Posterior cingulate gyrus (tissue), 11 donors: ENCODE measurements at regions of chr7 and their contacts with region 1.

Region 1: GRCh38 chr7:75830978-75831377 is 17.4 kb upstream of the CCL24 start:
- DNase-seq: no peak

Region 2: DNA sequence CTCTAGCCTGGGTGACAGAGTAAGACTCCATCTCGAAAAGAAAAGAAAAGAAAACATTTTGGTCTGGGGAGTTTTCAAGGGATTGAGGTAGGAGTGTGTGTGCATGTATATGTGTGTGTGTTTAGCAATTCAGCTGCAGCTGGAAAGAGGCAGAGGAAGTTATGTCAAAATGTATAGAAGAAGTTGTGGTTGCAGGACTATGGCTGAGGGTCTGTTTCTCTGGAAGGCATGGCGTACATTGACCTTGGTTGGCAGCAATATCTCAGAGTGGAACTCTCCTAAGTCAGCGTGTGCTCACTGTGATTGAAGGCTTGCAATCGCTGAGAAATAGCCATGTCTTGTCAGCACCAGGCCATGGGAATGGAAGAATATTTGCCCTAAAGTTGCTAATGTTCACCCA is 19.3 kb after region 1 on chr7:
- intact Hi-C with region 1: loop called (anchors 2 kb)
- DNase-seq: no peak

Region 3: DNA sequence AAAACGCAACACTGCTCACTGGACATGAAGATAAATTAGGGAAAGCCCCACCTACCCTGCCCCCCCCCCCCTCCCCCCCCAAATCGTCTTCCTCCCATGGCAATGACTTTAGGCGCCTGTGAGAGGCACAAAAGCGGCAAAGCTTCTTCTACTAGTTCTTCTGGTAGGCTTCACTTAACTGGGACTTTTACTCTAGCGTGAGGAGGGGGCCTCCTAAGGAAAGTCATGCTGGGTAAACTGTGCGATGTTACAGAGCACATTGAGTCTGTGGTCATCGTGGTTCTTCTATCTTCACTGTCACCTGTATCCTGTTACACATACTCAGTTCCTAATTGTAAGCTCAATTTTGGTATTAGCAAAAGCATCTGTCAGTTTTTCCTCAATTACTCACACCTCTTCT is 496.6 kb after region 1 on chr7:
- intact Hi-C with region 1: no loop called
- DNase-seq: peak in 1 of 10 donors; percentile 13